ENCODE measurements at regions of chr5 and their contacts with region 1.

Region 1: GRCh38 chr5:137778772-137779564 is 24.8 kb upstream of the HNRNPA0 start:
- DNase-seq: no peak
- ATAC-seq: 0 out of 3 replicates have a peak, but pooled peaks have one; percentile 27
- H3K4me3 ChIP-seq: no peak overlapping the region
- H3K27ac ChIP-seq: no peak overlapping the region
- H3K4me1 ChIP-seq: peaks cover 3% of the 10 kb centered on the region; the same call in 1 of the 2 replicates
- H3K27me3 ChIP-seq: no peaks in the 10 kb centered on the region
- CTCF ChIP-seq: peak; percentile 63 to 65 (median 63)
- EP300 ChIP-seq: no peak
- POLR2A ChIP-seq: no peak
- RAD21 ChIP-seq: peak; percentile 94

Region 2: GRCh38 chr5:137487600-137487999 is 291.4 kb before region 1 on chr5:
- CTCF ChIA-PET with region 1: no interaction called
- POLR2A ChIA-PET with region 1: no interaction called
- RAD21 ChIA-PET with region 1: no interaction called
- SMC1A ChIA-PET with region 1: no interaction called
- in situ Hi-C with region 1: no loop called
- intact Hi-C with region 1: no loop called
- DNase-seq: no peak
- ATAC-seq: no peak
- H3K4me3 ChIP-seq: no peak overlapping the region
- H3K27ac ChIP-seq: no peak overlapping the region
- H3K4me1 ChIP-seq: no peaks in the 10 kb centered on the region
- H3K27me3 ChIP-seq: no peaks in the 10 kb centered on the region; a peak in 1 of 4 replicates
- CTCF ChIP-seq: no peak
- EP300 ChIP-seq: no peak
- POLR2A ChIP-seq: no peak
- RAD21 ChIP-seq: no peak

Region 3: GRCh38 chr5:137604348-137605095 is 174.4 kb before region 1 on chr5:
- CTCF ChIA-PET with region 1: no interaction called
- POLR2A ChIA-PET with region 1: no interaction called
- RAD21 ChIA-PET with region 1: no interaction called
- SMC1A ChIA-PET with region 1: no interaction called
- in situ Hi-C with region 1: no loop called
- intact Hi-C with region 1: no loop called
- DNase-seq: no peak
- ATAC-seq: no peak
- H3K4me3 ChIP-seq: no peak overlapping the region
- H3K27ac ChIP-seq: no peak overlapping the region
- H3K4me1 ChIP-seq: no peaks in the 10 kb centered on the region
- H3K27me3 ChIP-seq: peaks cover 1 to 10% of the 10 kb centered on the region in 2 experiments; a peak in 3 of 4 replicates
- CTCF ChIP-seq: no peak
- EP300 ChIP-seq: no peak
- POLR2A ChIP-seq: no peak
- RAD21 ChIP-seq: no peak

Region 4: GRCh38 chr5:137629646-137630045 is 149.3 kb before region 1 on chr5:
- CTCF ChIA-PET with region 1: interaction called, 16 read pairs
- POLR2A ChIA-PET with region 1: no interaction called
- RAD21 ChIA-PET with region 1: interaction called, 4 read pairs
- SMC1A ChIA-PET with region 1: interaction called, 4 read pairs
- in situ Hi-C with region 1: no loop called
- intact Hi-C with region 1: no loop called
- DNase-seq: peak; percentile 8
- ATAC-seq: peak; percentile 92
- H3K4me3 ChIP-seq: no peak overlapping the region
- H3K27ac ChIP-seq: no peak overlapping the region
- H3K4me1 ChIP-seq: no peaks in the 10 kb centered on the region
- H3K27me3 ChIP-seq: no peaks in the 10 kb centered on the region
- CTCF ChIP-seq: peak; percentile 75 to 89 (median 86)
- EP300 ChIP-seq: no peak
- POLR2A ChIP-seq: no peak
- RAD21 ChIP-seq: peak; percentile 90

Region 5: DNA sequence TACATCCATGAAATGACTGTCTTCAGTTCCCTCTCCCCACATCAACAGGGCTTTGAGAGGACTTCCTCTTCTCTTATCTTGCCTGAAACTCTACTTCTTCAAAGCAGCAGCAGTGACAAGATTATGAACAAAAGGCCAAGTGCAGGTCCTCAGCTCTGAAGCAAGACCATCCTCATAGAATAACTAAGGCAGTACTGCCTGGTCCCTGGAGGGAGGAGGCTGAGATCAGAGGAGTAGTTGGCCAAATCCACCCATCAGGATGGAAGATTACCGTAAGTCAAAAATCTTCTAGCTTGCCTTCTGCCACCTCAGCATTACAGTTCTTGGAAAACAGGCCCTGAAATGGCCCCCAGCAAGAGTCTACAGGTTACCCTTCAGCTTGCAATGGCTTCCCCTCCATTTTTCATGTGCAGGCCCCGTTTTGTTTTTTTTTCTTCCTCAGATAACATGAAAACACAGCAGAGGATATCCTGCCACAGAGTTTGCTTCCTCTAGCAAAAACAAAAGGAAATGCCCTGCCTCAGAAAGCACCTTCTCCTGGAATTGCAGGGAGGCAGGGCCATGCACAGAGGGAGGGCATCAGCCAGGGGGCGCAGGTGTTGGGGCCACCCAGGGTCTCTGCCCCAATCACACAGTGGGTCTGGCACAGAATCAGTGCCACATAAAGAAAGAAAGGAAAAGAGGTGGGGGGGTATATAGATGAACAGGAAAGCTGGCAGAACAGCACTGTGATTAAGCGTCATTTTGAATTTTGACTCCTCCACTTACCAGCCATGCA is 83.1 kb before region 1 on chr5:
- CTCF ChIA-PET with region 1: no interaction called
- POLR2A ChIA-PET with region 1: no interaction called
- RAD21 ChIA-PET with region 1: no interaction called
- SMC1A ChIA-PET with region 1: no interaction called
- in situ Hi-C with region 1: no loop called
- intact Hi-C with region 1: no loop called
- DNase-seq: no peak
- ATAC-seq: no peak
- H3K4me3 ChIP-seq: no peak overlapping the region
- H3K27ac ChIP-seq: peak overlapping the region; percentile 21; the same call in 1 of the 2 replicates
- H3K4me1 ChIP-seq: peaks cover 7% of the 10 kb centered on the region
- H3K27me3 ChIP-seq: no peaks in the 10 kb centered on the region
- CTCF ChIP-seq: peak in 2 of 3 experiments; percentile 12 to 15; a peak in 1 of 6 replicates
- EP300 ChIP-seq: no peak
- POLR2A ChIP-seq: no peak
- RAD21 ChIP-seq: no peak

Region 6: GRCh38 chr5:137800700-137801411 is 21.9 kb after region 1 on chr5:
- CTCF ChIA-PET with region 1: interaction called, 24 read pairs
- POLR2A ChIA-PET with region 1: no interaction called
- RAD21 ChIA-PET with region 1: interaction called, 5 read pairs
- SMC1A ChIA-PET with region 1: interaction called, 12 read pairs
- in situ Hi-C with region 1: no loop called
- intact Hi-C with region 1: no loop called
- DNase-seq: no peak
- ATAC-seq: no peak
- H3K4me3 ChIP-seq: no peak overlapping the region
- H3K27ac ChIP-seq: no peak overlapping the region
- H3K4me1 ChIP-seq: no peaks in the 10 kb centered on the region
- H3K27me3 ChIP-seq: no peaks in the 10 kb centered on the region
- CTCF ChIP-seq: no peak
- EP300 ChIP-seq: no peak
- POLR2A ChIP-seq: no peak
- RAD21 ChIP-seq: no peak

Region 7: DNA sequence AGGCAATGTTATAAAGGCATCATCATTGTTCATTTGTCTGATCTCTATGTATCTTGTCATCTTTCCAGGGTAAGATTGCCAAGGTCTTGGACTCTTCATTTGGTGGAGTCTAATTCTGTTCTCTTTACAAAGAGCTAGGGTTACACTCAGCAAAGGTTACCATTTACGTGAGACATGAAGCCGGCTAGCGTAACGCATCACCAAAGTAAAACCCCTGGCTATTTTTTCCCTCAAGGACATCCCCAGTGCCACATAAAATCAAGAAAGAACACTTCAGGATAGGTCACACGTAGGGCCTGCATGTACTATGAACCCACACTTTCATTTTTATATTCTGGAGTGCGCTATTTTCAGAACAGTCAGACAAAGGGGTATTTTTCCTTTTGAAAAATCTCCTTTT is 68.7 kb after region 1 on chr5:
- CTCF ChIA-PET with region 1: interaction called, 15 read pairs
- POLR2A ChIA-PET with region 1: no interaction called
- RAD21 ChIA-PET with region 1: interaction called, 3 read pairs
- SMC1A ChIA-PET with region 1: interaction called, 13 read pairs
- in situ Hi-C with region 1: no loop called
- intact Hi-C with region 1: no loop called
- DNase-seq: peak; percentile 33
- ATAC-seq: peak; percentile 90
- H3K4me3 ChIP-seq: peak overlapping the region; percentile 63; the same call in 1 of the 2 replicates
- H3K27ac ChIP-seq: peak overlapping the region; percentile 45
- H3K4me1 ChIP-seq: peaks cover 13% of the 10 kb centered on the region
- H3K27me3 ChIP-seq: no peaks in the 10 kb centered on the region
- CTCF ChIP-seq: no peak
- EP300 ChIP-seq: peak; percentile 11 to 48; a peak in 1 of 4 replicates
- POLR2A ChIP-seq: no peak
- RAD21 ChIP-seq: no peak

Region 8: DNA sequence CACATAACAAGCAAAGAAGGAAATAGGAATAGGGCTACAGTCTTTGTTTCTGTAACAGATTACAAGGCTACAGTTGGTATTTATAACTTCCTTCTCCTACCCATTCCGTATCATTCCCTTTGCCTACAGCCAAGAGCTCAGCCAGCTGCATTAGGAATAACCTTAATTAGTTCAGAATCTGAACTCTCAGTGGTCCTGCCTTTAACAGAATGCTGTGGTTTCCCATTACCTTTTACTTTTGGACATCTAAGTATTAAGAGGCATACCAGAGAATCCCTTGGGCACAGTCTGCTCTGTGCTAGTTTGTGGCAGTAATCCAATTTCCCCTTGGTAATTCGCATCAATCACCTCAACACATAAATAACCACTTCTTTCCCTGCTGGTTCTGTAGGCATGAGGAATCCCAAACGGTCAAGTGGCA is 154.5 kb after region 1 on chr5:
- CTCF ChIA-PET with region 1: interaction called, 22 read pairs
- POLR2A ChIA-PET with region 1: no interaction called
- RAD21 ChIA-PET with region 1: interaction called, 12 read pairs
- SMC1A ChIA-PET with region 1: interaction called, 16 read pairs
- in situ Hi-C with region 1: no loop called
- intact Hi-C with region 1: loop called (anchors 10 kb)
- DNase-seq: no peak
- ATAC-seq: no peak
- H3K4me3 ChIP-seq: no peak overlapping the region
- H3K27ac ChIP-seq: no peak overlapping the region
- H3K4me1 ChIP-seq: peaks cover 14% of the 10 kb centered on the region
- H3K27me3 ChIP-seq: no peaks in the 10 kb centered on the region
- CTCF ChIP-seq: no peak
- EP300 ChIP-seq: no peak
- POLR2A ChIP-seq: no peak
- RAD21 ChIP-seq: no peak

Region 9: GRCh38 chr5:137989419-137989818 is 210.5 kb after region 1 on chr5:
- CTCF ChIA-PET with region 1: interaction called, 19 read pairs
- POLR2A ChIA-PET with region 1: no interaction called
- RAD21 ChIA-PET with region 1: interaction called, 4 read pairs
- SMC1A ChIA-PET with region 1: interaction called, 8 read pairs
- in situ Hi-C with region 1: no loop called
- intact Hi-C with region 1: no loop called
- DNase-seq: no peak
- ATAC-seq: no peak
- H3K4me3 ChIP-seq: no peak overlapping the region
- H3K27ac ChIP-seq: no peak overlapping the region
- H3K4me1 ChIP-seq: no peaks in the 10 kb centered on the region
- H3K27me3 ChIP-seq: no peaks in the 10 kb centered on the region
- CTCF ChIP-seq: no peak
- EP300 ChIP-seq: no peak
- POLR2A ChIP-seq: no peak
- RAD21 ChIP-seq: no peak

Region 10: DNA sequence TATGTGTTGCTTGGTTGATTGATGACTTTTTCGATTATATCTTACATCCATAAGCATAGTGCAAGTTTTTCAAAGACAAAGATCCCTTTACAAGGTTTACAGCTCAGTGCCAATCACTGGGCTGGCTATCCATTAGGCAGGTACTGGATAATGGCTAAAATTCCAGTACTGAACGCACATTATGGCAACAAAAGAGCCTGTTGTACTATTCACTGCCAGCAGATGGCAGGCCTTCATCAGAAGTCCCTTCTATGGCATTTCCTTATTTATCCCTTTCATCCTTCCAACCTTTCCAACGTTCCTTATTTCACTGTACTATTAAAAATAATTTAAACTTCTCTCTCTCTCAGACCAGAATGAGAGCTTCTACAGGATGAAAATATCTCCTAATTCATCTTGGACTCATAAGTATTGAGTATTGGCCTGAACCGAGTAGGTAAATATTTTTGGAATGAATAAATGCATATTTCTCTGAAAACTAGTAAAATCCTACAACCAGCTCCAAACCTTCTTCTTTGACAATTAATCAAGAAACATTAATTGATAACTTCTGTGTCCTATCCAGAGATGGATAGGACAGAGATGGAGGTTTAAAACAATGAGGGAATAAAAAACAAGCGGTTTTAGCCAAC is 298.2 kb after region 1 on chr5:
- CTCF ChIA-PET with region 1: interaction called, 10 read pairs
- POLR2A ChIA-PET with region 1: no interaction called
- RAD21 ChIA-PET with region 1: no interaction called
- SMC1A ChIA-PET with region 1: interaction called, 3 read pairs
- in situ Hi-C with region 1: no loop called
- intact Hi-C with region 1: no loop called
- DNase-seq: no peak
- ATAC-seq: peak; percentile 59
- H3K4me3 ChIP-seq: no peak overlapping the region
- H3K27ac ChIP-seq: no peak overlapping the region
- H3K4me1 ChIP-seq: peaks cover 7% of the 10 kb centered on the region
- H3K27me3 ChIP-seq: no peaks in the 10 kb centered on the region
- CTCF ChIP-seq: peak; percentile 75 to 92 (median 79)
- EP300 ChIP-seq: no peak
- POLR2A ChIP-seq: no peak
- RAD21 ChIP-seq: peak; percentile 89

Region 11: GRCh38 chr5:139312075-139312474 is 1533.1 kb after region 1 on chr5:
- CTCF ChIA-PET with region 1: no interaction called
- POLR2A ChIA-PET with region 1: no interaction called
- RAD21 ChIA-PET with region 1: no interaction called
- SMC1A ChIA-PET with region 1: no interaction called
- in situ Hi-C with region 1: no loop called
- intact Hi-C with region 1: no loop called
- DNase-seq: no peak
- ATAC-seq: no peak
- H3K4me3 ChIP-seq: no peak overlapping the region
- H3K27ac ChIP-seq: no peak overlapping the region
- H3K4me1 ChIP-seq: no peaks in the 10 kb centered on the region
- H3K27me3 ChIP-seq: no peaks in the 10 kb centered on the region
- CTCF ChIP-seq: no peak
- EP300 ChIP-seq: no peak
- POLR2A ChIP-seq: no peak
- RAD21 ChIP-seq: no peak